PC-3 (cell line): ENCODE measurements at regions of chr13 and their contacts with region 1.

Region 1: GRCh38 chr13:95624020-95624419 is 20.5 kb downstream of the DZIP1 start:
- DNase-seq: peak; percentile 58
- ATAC-seq: peak; percentile 70
- H3K4me3 ChIP-seq: no peak overlapping the region
- H3K27ac ChIP-seq: no peak overlapping the region
- H3K4me1 ChIP-seq: no peaks in the 10 kb centered on the region
- H3K27me3 ChIP-seq: no peaks in the 10 kb centered on the region
- CTCF ChIP-seq: peak; percentile 59

Region 2: GRCh38 chr13:95982144-95982543 is 358.1 kb after region 1 on chr13:
- CTCF ChIA-PET with region 1: no interaction called
- POLR2A ChIA-PET with region 1: no interaction called
- intact Hi-C with region 1: loop called (anchors 5 kb)
- DNase-seq: no peak
- ATAC-seq: no peak
- H3K4me3 ChIP-seq: no peak overlapping the region
- H3K27ac ChIP-seq: no peak overlapping the region
- H3K4me1 ChIP-seq: no peaks in the 10 kb centered on the region
- H3K27me3 ChIP-seq: no peaks in the 10 kb centered on the region
- CTCF ChIP-seq: no peak